ENCODE measurements at regions of chrX and their contacts with region 1.

Region 1: DNA sequence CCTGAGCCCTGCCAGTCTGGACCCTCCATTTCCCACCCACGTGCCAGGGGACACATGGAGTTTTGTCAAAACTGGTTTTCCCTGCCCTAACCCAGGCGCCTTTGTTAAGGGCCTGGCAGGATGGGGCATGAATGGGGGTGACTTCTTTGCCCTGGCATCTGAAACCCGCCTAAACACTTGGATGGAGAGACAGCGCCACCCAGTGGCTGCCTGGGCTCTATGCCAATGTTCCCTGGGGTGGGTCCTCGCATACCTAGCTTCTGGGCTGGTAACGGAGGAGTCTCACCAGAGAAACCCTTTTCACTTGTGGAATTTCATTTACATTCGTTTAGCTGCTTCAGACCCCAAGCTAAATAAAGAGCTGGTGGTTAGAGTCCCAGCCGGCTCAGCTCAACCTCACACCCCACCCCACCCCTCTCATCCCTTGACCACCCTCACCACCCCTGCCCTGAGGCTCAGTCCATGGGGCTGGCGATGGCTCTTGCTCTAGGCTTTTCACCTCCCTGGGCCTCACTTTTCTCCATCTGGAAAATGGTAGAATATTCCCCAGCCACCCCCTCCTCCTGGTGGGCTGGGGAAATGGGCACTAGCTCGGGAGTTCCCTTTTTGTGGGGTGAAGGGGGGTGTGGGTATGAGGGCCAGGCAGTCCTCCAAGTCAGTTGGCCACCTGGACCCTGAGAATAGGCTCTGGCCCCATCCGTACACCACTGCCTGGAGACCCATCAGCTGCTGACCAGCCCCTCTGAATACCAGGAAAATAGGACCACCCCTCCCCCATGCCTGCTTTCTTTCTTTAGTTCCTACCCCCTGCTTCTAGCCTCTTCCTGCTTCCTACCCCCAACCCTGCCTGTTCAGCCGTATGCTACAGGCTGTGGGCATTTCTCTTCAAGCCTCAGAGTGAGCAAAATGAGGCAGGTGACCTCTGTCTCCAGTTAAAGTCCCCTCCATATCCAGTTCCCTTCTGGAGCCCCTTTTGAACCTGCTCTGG is 57.1 kb upstream of the PJA1 start:
- DNase-seq: peak; percentile 90
- H3K4me3 ChIP-seq: no peak overlapping the region
- H3K27ac ChIP-seq: no peak overlapping the region
- H3K4me1 ChIP-seq: no peaks in the 10 kb centered on the region
- H3K27me3 ChIP-seq: peaks cover 5% of the 10 kb centered on the region
- CTCF ChIP-seq: peak; percentile 81
- EP300 ChIP-seq: no peak
- RAD21 ChIP-seq: peak; percentile 93

Region 2: DNA sequence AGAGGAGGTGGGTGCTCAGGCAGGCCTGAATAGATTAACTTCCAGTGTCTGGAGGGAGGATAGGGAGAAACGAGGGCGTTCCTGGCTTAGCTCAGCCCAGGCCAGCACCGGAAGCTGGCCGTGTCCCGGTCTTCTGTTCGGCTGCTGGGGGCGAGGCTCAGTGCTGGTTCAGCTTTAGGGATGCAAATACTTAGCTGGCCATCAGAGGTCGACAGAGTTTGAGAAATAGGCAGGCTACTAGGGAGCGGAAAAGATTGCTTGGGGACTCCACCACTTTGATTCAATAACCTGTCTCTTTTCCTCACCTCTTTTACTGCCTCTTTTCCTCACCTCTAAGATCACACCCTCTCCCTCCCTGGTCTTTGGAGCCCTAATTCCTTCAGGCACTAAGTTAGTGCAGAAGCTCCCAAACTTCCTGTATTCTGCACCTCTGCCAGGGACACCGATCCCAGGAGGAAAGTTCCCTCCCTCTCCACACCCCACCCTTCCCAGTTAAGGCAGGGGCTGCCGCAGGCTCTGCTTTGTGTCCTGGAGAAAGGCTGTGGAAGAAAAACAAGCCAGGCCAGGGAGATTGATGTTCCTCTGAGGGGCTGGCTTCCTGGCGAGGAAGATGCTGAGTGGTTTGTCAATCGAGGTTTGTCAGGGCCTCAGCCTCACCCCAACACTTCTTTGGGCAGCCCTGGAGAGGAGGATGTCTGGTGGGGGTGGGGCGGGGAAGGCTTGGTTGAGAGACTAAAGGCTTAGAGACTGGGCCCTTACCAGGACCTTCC is 399.6 kb before region 1 on chrX:
- CTCF ChIA-PET with region 1: interaction called, 95 read pairs
- POLR2A ChIA-PET with region 1: interaction called, 26 read pairs
- DNase-seq: peak; percentile 66
- H3K4me3 ChIP-seq: no peak overlapping the region
- H3K27ac ChIP-seq: no peak overlapping the region
- H3K4me1 ChIP-seq: no peaks in the 10 kb centered on the region; a peak in 1 of 4 replicates
- H3K27me3 ChIP-seq: peaks cover 6% of the 10 kb centered on the region; the same call in 1 of the 2 replicates
- CTCF ChIP-seq: peak; percentile 67
- EP300 ChIP-seq: no peak
- RAD21 ChIP-seq: peak; percentile 87

Region 3: DNA sequence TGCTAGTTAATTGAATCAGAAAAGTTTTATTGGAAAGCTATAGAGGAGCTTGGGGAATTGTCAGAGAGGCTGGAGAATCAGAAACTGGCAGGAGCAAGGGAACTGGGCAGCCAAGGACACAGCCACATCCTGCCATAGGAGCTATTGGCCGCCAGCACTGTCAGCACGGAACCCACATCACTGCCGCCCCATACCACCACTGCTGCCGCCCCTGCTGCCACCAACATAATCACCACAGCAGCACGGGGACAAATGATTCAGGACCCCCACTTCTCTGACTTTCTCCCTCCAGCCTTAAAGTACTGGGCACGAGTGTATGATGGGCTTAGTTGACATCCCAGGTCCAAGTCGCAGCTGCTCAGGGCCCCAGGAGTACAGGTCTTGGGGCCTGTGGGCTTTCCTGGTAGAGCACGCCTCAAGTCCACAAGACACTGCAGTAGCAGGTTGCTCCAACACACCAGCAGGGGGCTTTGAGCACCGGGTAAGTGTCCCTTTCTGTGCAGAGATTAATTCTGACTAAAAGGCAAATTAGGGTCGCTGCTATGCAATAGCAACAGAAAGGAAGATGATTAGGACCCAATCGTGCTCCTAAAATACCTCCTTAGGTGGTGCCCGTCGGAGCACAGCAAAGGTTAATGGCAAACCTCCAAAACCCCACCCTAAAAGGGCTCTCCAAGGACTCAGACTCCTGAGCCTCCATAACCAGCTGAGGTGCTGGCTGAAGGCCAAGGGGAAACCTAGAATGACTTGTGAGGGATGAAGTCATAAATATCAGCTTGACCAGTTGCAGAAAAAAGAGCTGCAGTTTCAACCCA is 64.0 kb before region 1 on chrX:
- CTCF ChIA-PET with region 1: interaction called, 13 read pairs
- POLR2A ChIA-PET with region 1: no interaction called
- DNase-seq: peak; percentile 65
- H3K4me3 ChIP-seq: no peak overlapping the region
- H3K27ac ChIP-seq: no peak overlapping the region
- H3K4me1 ChIP-seq: peaks cover 0 to 2% of the 10 kb centered on the region in 2 experiments; a peak in 1 of 4 replicates
- H3K27me3 ChIP-seq: peaks cover 7% of the 10 kb centered on the region; the same call in 1 of the 2 replicates
- CTCF ChIP-seq: peak; percentile 66
- EP300 ChIP-seq: no peak
- RAD21 ChIP-seq: peak; percentile 57

Region 4: DNA sequence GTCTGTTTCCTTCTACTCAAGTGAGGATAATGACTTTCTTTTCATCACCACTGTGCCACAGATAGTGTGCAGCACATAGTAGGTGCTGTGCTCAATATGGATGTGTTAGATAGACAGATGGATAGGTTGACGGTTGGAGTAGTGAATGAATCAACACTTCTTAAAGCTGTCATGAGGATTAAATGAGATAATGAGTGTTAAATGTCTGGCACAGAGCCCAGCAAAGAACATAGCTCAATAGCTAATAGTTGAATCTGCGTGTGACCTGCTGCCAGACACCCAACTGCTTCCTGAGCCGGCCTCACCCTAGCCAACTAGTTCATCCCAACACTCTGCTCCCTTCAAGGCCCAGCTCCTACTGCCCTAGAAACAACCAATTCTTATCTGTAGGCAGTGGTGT is 10.5 kb after region 1 on chrX:
- CTCF ChIA-PET with region 1: interaction called, 28 read pairs
- POLR2A ChIA-PET with region 1: no interaction called
- DNase-seq: no peak
- H3K4me3 ChIP-seq: no peak overlapping the region
- H3K27ac ChIP-seq: no peak overlapping the region
- H3K4me1 ChIP-seq: peaks cover 0 to 7% of the 10 kb centered on the region in 2 experiments; a peak in 1 of 4 replicates
- H3K27me3 ChIP-seq: no peaks in the 10 kb centered on the region
- CTCF ChIP-seq: no peak
- EP300 ChIP-seq: no peak
- RAD21 ChIP-seq: no peak

Region 5: GRCh38 chrX:69238114-69238886 is 15.9 kb after region 1 on chrX:
- CTCF ChIA-PET with region 1: interaction called, 28 read pairs
- POLR2A ChIA-PET with region 1: no interaction called
- DNase-seq: peak; percentile 73
- H3K4me3 ChIP-seq: no peak overlapping the region
- H3K27ac ChIP-seq: peak overlapping the region in 1 of 2 experiments; percentile 74; a peak in 2 of 4 replicates
- H3K4me1 ChIP-seq: peaks cover 0 to 19% of the 10 kb centered on the region in 2 experiments; a peak in 1 of 4 replicates
- H3K27me3 ChIP-seq: peaks cover 4% of the 10 kb centered on the region
- CTCF ChIP-seq: no peak
- EP300 ChIP-seq: peak in 1 of 2 experiments; percentile 25; a peak in 1 of 4 replicates
- RAD21 ChIP-seq: no peak

Region 6: GRCh38 chrX:69285881-69286564 is 63.6 kb after region 1 on chrX:
- CTCF ChIA-PET with region 1: interaction called, 22 read pairs
- POLR2A ChIA-PET with region 1: no interaction called
- DNase-seq: peak; percentile 87
- H3K4me3 ChIP-seq: peak overlapping the region; percentile 41 to 56
- H3K27ac ChIP-seq: no peak overlapping the region
- H3K4me1 ChIP-seq: peaks cover 0 to 6% of the 10 kb centered on the region in 2 experiments; a peak in 2 of 4 replicates
- H3K27me3 ChIP-seq: peaks cover 10% of the 10 kb centered on the region; the same call in 1 of the 2 replicates
- CTCF ChIP-seq: peak; percentile 90
- EP300 ChIP-seq: no peak
- RAD21 ChIP-seq: peak; percentile 80

Region 7: GRCh38 chrX:69387567-69388487 is 165.4 kb after region 1 on chrX:
- CTCF ChIA-PET with region 1: interaction called, 10 read pairs
- POLR2A ChIA-PET with region 1: no interaction called
- DNase-seq: peak; percentile 78
- H3K4me3 ChIP-seq: peak overlapping the region in 1 of 2 experiments; percentile 39; a peak in 1 of 4 replicates
- H3K27ac ChIP-seq: no peak overlapping the region
- H3K4me1 ChIP-seq: peaks cover 0 to 24% of the 10 kb centered on the region in 2 experiments; a peak in 2 of 4 replicates
- H3K27me3 ChIP-seq: peaks cover 34% of the 10 kb centered on the region; the same call in 1 of the 2 replicates
- CTCF ChIP-seq: peak; percentile 84
- EP300 ChIP-seq: no peak
- RAD21 ChIP-seq: peak; percentile 82

Measured in SK-N-SH (cell line).